ENCODE measurements at regions of chr1 and their contacts with region 1.

Region 1: GRCh38 chr1:85884372-85885035 is 176.3 kb upstream of the ZNHIT6 start:
- DNase-seq: peak; percentile 31
- H3K4me3 ChIP-seq: no peak overlapping the region
- H3K27ac ChIP-seq: no peak overlapping the region
- H3K4me1 ChIP-seq: no peaks in the 10 kb centered on the region
- H3K27me3 ChIP-seq: peaks cover 6 to 23% of the 10 kb centered on the region in 2 experiments
- CTCF ChIP-seq: peak in 1 of 2 donors; percentile 32
- POLR2A ChIP-seq: no peak

Region 2: GRCh38 chr1:85464497-85465098 is 419.9 kb before region 1 on chr1:
- CTCF ChIA-PET with region 1: no interaction called
- POLR2A ChIA-PET with region 1: no interaction called
- dilution Hi-C with region 1: no loop called
- intact Hi-C with region 1: no loop called
- DNase-seq: peak; percentile 90
- H3K4me3 ChIP-seq: peak overlapping the region; percentile 65 to 97 (median 91)
- H3K27ac ChIP-seq: peak overlapping the region; percentile 90
- H3K4me1 ChIP-seq: peaks cover 39% of the 10 kb centered on the region
- H3K27me3 ChIP-seq: no peaks in the 10 kb centered on the region
- CTCF ChIP-seq: no peak
- POLR2A ChIP-seq: peak; percentile 92

Region 3: GRCh38 chr1:85581802-85582686 is 302.5 kb before region 1 on chr1:
- CTCF ChIA-PET with region 1: no interaction called
- POLR2A ChIA-PET with region 1: no interaction called
- dilution Hi-C with region 1: no loop called
- intact Hi-C with region 1: loop called (anchors 1 kb)
- DNase-seq: peak; percentile 54
- H3K4me3 ChIP-seq: peak overlapping the region; percentile 57 to 98 (median 78)
- H3K27ac ChIP-seq: peak overlapping the region; percentile 92
- H3K4me1 ChIP-seq: peaks cover 16% of the 10 kb centered on the region
- H3K27me3 ChIP-seq: no peaks in the 10 kb centered on the region
- CTCF ChIP-seq: peak in 1 of 2 donors; percentile 7
- POLR2A ChIP-seq: peak; percentile 45

Region 4: DNA sequence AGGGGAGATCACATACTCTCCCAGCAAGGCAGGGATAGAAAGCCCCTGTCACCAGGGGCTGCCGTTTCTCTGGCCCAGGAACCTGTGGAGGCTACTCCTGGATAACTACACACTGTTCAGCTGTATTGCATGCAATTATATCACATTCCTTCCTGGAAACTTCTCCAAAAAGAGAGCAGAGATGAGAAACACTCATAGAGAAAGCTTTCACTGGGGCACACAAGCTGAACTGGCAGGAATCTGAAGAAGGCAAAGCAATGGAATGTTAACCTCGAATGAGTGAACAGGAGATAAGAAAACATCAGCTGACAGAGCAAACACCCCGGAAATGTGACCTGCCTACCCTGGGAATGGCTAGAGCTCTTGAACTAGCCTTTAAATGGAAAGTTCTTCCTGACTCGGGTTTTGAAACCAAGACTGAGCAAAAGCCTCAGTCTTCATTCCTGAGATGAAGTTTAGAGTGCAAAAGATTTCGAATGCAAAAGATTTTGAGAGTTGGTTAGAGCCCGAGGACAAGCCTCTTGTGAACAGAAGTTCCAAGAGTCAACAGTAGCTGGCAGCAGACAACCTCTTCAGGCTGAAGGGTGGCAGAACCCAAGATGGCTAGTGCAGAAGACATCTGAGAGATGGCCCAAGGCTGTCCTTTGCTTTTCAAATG is 271.7 kb before region 1 on chr1:
- CTCF ChIA-PET with region 1: no interaction called
- POLR2A ChIA-PET with region 1: no interaction called
- dilution Hi-C with region 1: no loop called
- intact Hi-C with region 1: loop called (anchors 10 kb)
- DNase-seq: peak; percentile 24
- H3K4me3 ChIP-seq: no peak overlapping the region
- H3K27ac ChIP-seq: no peak overlapping the region
- H3K4me1 ChIP-seq: peaks cover 18% of the 10 kb centered on the region
- H3K27me3 ChIP-seq: no peaks in the 10 kb centered on the region
- CTCF ChIP-seq: peak; percentile 36 to 41
- POLR2A ChIP-seq: no peak

Measured in endothelial cell of umbilical vein (primary cell).